Left cardiac atrium (tissue), 4 donors: ENCODE measurements at regions of chr5 and their contacts with region 1.

Region 1: GRCh38 chr5:132007399-132008165 is 3.9 kb downstream of the ACSL6 start:
- DNase-seq: peak; percentile 80
- ATAC-seq: peak; percentile 71 to 80

Region 2: GRCh38 chr5:131589510-131590348 is 417.9 kb before region 1 on chr5:
- intact Hi-C with region 1: loop called (anchors 2 to 5 kb)
- DNase-seq: no peak
- ATAC-seq: peak; percentile 72 to 74

Region 3: DNA sequence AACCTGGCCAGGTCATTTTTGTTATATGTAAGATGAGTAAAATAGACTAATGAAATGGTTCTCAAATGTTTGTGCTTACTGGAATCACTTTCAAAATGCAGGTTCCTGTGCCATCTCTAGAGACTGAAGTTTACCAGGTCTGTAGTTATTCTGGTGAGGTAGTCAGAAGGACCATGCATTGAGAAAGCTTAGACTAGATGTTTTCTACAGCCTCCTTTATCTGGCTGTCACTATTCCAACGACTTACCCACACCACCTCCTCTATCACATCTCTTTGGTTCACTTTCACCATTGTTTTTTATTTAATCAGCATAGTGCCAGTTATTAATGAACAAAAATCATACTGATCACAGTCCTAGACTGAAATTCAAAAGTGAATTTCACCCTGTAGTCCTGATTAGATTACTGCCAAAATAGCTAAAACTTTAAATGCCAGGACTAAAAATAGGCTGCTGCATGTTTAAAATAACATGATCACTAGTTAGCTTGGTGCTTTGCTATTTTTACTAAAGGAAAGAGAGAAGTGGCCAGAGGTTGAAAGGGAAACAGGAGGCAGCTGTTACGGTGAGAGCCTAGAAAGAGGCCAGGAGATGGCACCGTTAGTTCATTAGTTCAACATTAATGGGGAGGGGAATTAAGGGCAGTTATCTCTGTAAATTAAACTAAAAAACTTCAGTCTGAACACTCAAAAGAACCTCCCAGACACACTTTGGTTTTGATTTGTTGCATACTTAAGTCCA is 196.9 kb before region 1 on chr5:
- intact Hi-C with region 1: loop called (anchors 2 to 10 kb)
- DNase-seq: no peak
- ATAC-seq: peak; percentile 76 to 78

Region 4: GRCh38 chr5:131863700-131864099 is 143.9 kb before region 1 on chr5:
- intact Hi-C with region 1: no loop called
- DNase-seq: no peak
- ATAC-seq: no peak

Region 5: DNA sequence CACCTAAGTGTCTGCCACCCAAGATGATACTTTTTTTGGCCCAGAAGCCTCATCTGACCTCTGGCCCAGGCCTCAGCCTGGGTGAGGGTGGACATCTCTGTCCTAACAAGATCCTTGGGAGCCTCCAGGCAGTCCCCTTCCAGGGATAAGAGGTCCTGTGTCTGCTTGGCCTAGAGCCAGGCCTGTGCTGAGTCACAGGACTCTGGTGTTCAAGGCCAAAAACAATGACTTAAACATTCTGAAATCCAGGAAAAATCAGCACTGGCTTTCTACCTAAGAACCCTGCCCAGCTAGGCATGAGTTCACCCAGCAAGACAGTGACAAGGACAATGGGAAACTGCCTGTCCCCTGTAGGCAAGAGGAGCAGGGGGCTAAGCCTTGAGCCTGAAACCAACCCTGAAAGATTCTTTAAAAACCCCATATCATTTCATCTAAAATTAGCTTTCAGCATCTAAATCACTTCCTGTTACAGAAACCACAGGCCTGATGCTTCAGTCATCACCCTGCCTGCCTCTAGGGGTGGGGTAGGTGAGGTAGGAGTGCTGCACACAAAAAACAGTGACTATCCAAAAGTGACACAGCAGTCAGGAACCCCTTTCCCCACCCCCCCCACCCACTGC is 95.9 kb after region 1 on chr5:
- intact Hi-C with region 1: no loop called
- DNase-seq: peak; percentile 90
- ATAC-seq: peak; percentile 77 to 93